Right ventricle myocardium inferior (tissue), 1 donor: ENCODE measurements at regions of chr16 and their contacts with region 1.

Region 1: DNA sequence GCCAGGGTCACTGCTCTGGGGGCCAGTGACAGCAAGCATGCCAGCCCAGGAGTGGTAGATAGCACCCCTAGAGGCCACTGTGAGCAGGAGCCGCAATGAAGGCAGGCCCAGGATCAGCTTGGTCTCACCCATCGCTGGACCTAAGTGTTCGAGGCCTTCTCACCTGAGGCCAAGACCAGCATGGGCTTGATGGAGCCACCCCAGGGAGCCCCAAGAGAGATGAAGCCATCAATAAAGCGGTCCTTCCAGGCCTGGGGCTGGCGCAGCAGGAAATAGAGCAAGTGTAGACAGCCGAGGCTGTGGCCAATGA is 1.8 kb downstream of the LCAT start:
- DNase-seq: no peak
- ATAC-seq: no peak

Region 2: GRCh38 chr16:67987460-67988160 is 45.5 kb after region 1 on chr16:
- intact Hi-C with region 1: loop called (anchors 5 kb)
- DNase-seq: no peak
- ATAC-seq: peak; percentile 37